ENCODE measurements at regions of chr12 and their contacts with region 1.

Region 1: DNA sequence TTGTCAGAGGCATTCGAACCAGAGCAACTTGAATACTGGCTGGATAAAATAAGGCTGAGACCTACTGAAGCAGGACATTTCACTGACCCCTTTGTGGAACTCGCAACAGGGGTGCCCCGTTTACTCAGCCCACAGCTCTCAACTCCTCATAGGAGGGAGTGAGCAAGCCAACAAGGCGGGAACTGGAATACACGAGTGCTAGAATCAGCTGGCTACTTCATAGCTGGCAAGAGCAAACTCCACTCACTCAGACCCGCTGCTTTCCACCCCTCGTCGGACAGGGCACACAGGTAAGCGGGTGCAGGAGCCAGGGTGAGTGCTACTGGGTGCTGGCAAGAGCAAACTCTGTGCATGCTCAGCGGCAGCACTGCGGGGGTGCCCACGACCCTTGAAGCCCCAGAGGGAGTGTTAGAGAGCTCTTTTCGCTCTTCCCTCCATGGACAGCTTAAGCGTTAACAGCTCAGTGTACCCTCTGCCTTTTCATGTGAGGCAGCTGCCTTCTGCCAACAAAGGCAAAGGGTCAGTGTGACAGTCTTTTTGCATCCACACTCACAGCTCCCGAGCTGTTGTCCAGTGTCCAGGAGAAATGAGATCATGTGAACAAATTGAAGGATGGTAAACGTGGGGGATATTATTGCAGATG is 15.7 kb downstream of the CAPZA3 start:
- DNase-seq: peak; percentile 79

Region 2: DNA sequence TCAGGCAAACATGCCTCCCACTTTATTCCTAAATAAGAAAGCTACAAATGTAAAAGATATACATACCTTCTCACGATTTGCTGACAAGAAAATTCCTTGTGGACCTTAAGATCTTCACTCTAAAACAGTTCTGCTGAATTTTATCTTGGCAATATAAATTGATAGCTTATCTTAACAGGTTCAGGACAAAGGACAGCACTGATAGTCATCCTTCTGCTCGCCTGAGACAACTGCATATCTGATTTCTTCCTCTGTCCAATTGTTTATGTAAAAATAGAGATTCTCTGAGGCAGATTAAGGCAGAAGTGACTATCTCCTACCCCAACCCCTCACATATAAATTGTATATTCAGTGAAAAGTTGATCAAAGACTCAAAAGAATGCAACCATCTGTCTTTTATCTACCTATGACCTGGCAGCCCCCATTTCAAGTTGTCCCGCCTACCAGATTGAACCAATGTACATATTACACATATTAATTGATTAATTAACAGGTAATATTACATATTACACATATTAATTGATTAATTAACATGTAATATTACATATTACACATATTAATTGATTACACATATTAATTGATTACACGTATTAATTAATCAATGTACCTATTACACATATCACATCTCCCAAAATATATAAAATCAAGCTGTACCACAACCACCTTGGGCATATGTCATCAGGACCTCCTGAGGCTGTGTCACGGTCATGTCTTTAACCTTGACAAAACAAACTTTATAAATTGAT is 29.4 kb after region 1 on chr12:
- intact Hi-C with region 1: loop called in 1 of 2 experiments (anchors 1 kb)
- DNase-seq: no peak

Region 3: DNA sequence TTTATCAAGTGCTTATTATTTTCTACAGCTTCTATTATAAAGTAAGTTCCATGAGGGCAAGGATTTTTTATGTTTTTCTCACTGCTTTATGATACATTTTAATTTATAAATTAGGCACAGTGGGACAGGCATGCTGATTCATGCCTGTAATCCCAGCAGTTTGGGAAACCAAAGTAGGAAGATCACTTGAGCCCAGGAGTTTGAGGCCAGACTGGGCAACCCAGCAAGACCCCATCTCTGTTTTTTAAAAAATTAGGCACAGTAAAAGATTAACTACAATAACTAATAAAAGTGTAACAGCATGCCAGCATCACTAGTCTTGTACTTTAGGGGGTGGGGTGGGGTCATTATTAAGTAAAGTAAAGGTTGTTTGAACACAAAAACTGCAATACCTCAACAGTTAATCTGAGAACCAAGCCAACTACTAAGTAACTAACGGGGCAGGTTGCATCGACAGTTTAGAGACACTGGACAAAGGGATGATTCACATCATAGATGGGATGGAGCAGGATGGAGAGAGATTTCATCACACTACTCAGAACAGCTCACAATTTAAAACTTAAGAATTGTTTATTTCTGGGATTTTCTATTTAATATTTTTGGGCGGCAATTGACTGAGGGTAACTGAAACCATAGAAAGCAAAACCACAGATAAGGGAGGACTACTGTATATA is 495.5 kb after region 1 on chr12:
- intact Hi-C with region 1: no loop called
- DNase-seq: no peak